PC-9 (cell line): ENCODE measurements at regions of chr15 and their contacts with region 1.

Region 1: DNA sequence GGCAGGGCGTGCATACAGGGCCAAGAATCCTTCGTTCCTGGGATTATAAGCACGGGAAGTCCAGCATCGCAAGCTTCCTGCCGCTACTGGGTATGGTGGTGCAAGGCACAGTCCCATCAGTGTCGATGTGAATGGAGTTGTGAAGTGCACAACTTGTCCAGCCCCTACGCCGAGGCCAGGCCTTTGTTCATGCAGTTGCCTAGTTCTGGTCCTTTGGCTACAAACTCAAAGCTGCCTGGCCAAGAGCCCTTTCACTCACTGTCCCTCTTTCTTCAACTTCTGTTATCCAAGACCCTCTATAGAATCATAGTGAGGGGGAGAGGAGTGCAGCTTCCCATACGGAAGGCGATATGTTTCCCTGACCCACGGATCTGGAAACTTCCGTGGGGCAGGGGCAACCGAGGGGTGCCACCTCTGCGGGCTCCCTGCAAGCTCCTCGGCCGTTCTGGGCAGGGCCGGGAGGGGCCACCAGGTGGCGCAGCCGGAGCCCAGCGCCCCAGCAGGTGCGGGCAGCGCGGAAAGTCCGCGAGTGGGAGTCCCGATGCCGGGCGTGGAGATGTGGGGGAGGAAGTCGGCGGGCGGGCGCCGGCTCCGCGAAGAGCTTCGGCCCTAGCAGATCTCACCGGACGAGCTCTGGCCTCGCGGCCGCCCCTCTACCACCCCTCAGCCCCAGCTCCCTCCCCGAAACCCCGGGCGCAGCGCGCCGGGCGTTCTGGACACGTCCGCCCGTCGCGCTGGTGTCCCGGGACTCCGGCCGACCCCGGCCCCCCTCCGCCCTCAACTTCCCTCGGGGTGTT is 693 bp downstream of the RASGRP1 start:
- DNase-seq: peak in 1 of 2 experiments; percentile 67
- H3K4me3 ChIP-seq: peak overlapping the region; percentile 62; the same call in 1 of the 2 replicates
- H3K27ac ChIP-seq: no peak overlapping the region
- H3K4me1 ChIP-seq: no peaks in the 10 kb centered on the region
- H3K27me3 ChIP-seq: no peaks in the 10 kb centered on the region
- CTCF ChIP-seq: peak; percentile 89

Region 2: GRCh38 chr15:36883713-36884517 is 1680.0 kb before region 1 on chr15:
- CTCF ChIA-PET with region 1: interaction called, 15 read pairs
- POLR2A ChIA-PET with region 1: no interaction called
- intact Hi-C with region 1: no loop called
- DNase-seq: peak in 1 of 2 experiments; percentile 72
- H3K4me3 ChIP-seq: no peak overlapping the region
- H3K27ac ChIP-seq: no peak overlapping the region
- H3K4me1 ChIP-seq: no peaks in the 10 kb centered on the region
- H3K27me3 ChIP-seq: no peaks in the 10 kb centered on the region
- CTCF ChIP-seq: peak; percentile 86

Region 3: GRCh38 chr15:38474155-38474757 is 89.7 kb before region 1 on chr15:
- CTCF ChIA-PET with region 1: no interaction called
- POLR2A ChIA-PET with region 1: no interaction called
- intact Hi-C with region 1: loop called (anchors 10 kb)
- DNase-seq: peak; percentile 9 to 39
- H3K4me3 ChIP-seq: no peak overlapping the region
- H3K27ac ChIP-seq: no peak overlapping the region
- H3K4me1 ChIP-seq: no peaks in the 10 kb centered on the region
- H3K27me3 ChIP-seq: no peaks in the 10 kb centered on the region
- CTCF ChIP-seq: peak; percentile 73

Region 4: GRCh38 chr15:38551720-38552648 is 11.9 kb before region 1 on chr15:
- CTCF ChIA-PET with region 1: no interaction called
- POLR2A ChIA-PET with region 1: no interaction called
- intact Hi-C with region 1: no loop called
- DNase-seq: no peak
- H3K4me3 ChIP-seq: no peak overlapping the region
- H3K27ac ChIP-seq: no peak overlapping the region
- H3K4me1 ChIP-seq: no peaks in the 10 kb centered on the region
- H3K27me3 ChIP-seq: no peaks in the 10 kb centered on the region
- CTCF ChIP-seq: no peak

Region 5: GRCh38 chr15:38647683-38648082 is 83.8 kb after region 1 on chr15:
- CTCF ChIA-PET with region 1: no interaction called
- POLR2A ChIA-PET with region 1: no interaction called
- intact Hi-C with region 1: loop called (anchors 1 kb)
- DNase-seq: no peak
- H3K4me3 ChIP-seq: no peak overlapping the region
- H3K27ac ChIP-seq: no peak overlapping the region
- H3K4me1 ChIP-seq: no peaks in the 10 kb centered on the region
- H3K27me3 ChIP-seq: no peaks in the 10 kb centered on the region
- CTCF ChIP-seq: peak; percentile 57

Region 6: DNA sequence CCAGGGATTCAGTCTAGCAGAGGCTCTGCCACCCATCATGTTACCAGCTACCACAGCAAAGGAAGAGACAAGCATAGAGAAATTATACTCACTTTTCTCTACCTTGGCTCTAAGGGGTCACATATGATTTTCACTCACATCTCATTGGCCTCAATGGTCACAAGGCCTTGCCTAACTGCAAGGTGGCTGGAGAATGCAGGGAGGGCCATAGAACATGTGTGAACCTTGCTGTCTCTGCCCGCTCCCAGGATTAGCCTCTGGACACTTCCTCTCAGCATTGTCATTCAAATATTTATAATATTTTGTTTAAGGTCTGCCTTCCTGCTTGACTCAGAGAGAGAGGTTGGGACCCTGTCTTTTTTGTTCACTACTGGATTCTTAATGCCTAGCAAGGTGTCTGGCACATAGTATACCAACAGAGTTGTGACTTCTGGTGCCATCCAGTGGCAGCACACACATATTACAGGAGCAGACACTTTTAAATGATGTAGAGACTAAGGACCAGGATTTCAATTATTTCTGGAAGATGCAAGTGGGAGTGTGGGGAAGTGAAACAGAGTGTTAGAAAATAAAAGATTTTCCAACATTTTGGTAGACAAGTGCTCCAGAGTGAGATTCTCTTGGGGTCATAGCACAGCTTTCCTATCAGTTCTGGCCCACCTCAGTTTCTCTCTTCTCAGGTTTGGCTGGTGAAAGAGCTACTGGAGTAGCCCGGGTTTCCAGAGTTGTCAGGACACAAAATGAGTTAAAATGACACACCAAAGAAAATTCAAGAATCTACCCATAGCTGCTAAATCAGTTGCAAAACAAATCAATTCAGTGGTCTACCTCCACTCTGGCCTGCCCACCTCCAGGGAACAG is 119.7 kb after region 1 on chr15:
- CTCF ChIA-PET with region 1: interaction called, 6 read pairs
- POLR2A ChIA-PET with region 1: no interaction called
- intact Hi-C with region 1: loop called (anchors 2 kb)
- DNase-seq: peak in 1 of 2 experiments; percentile 41
- H3K4me3 ChIP-seq: no peak overlapping the region
- H3K27ac ChIP-seq: no peak overlapping the region
- H3K4me1 ChIP-seq: no peaks in the 10 kb centered on the region
- H3K27me3 ChIP-seq: no peaks in the 10 kb centered on the region
- CTCF ChIP-seq: peak; percentile 77